Caco-2 (cell line): ENCODE measurements at regions of chr13 and their contacts with region 1.

Region 1: GRCh38 chr13:99949679-99950413 is 21.7 kb downstream of the ZIC5 start:
- DNase-seq: no peak
- H3K4me3 ChIP-seq: no peak overlapping the region
- H3K4me3 Mint-ChIP-seq: no peak overlapping the region
- H3K27ac Mint-ChIP-seq: no peak overlapping the region
- H3K4me1 ChIP-seq: 0 out of 2 replicates have a peak, but pooled peaks cover 5% of the 10 kb centered on the region
- H3K4me1 Mint-ChIP-seq: no peaks in the 10 kb centered on the region
- H3K27me3 ChIP-seq: no peaks in the 10 kb centered on the region
- H3K27me3 Mint-ChIP-seq: peaks cover 8% of the 10 kb centered on the region
- CTCF ChIP-seq: no peak

Region 2: GRCh38 chr13:99709134-99709533 is 240.7 kb before region 1 on chr13:
- CTCF ChIA-PET with region 1: no interaction called
- POLR2A ChIA-PET with region 1: interaction called, 10 read pairs
- intact Hi-C with region 1: no loop called
- DNase-seq: no peak
- H3K4me3 ChIP-seq: no peak overlapping the region
- H3K4me3 Mint-ChIP-seq: no peak overlapping the region
- H3K27ac Mint-ChIP-seq: no peak overlapping the region
- H3K4me1 ChIP-seq: no peaks in the 10 kb centered on the region
- H3K4me1 Mint-ChIP-seq: no peaks in the 10 kb centered on the region
- H3K27me3 ChIP-seq: no peaks in the 10 kb centered on the region; the same call in 1 of the 2 replicates
- H3K27me3 Mint-ChIP-seq: no peaks in the 10 kb centered on the region
- CTCF ChIP-seq: no peak